ENCODE measurements at regions of chr3 and their contacts with region 1.

Region 1: GRCh38 chr3:2268779-2269178 is 170.1 kb downstream of the CNTN4 start:
- DNase-seq: no peak
- ATAC-seq: no peak
- H3K4me3 ChIP-seq: no peak overlapping the region
- H3K27ac ChIP-seq: no peak overlapping the region
- H3K4me1 ChIP-seq: no peaks in the 10 kb centered on the region
- H3K27me3 ChIP-seq: no peaks in the 10 kb centered on the region
- CTCF ChIP-seq: peak in 5 of 12 donors; percentile 13 to 19 (median 15)
- POLR2A ChIP-seq: no peak

Region 2: GRCh38 chr3:1576078-1576477 is 692.7 kb before region 1 on chr3:
- intact Hi-C with region 1: no loop called
- DNase-seq: no peak
- ATAC-seq: no peak
- H3K4me3 ChIP-seq: no peak overlapping the region
- H3K27ac ChIP-seq: no peak overlapping the region
- H3K4me1 ChIP-seq: no peaks in the 10 kb centered on the region
- H3K27me3 ChIP-seq: no peaks in the 10 kb centered on the region
- CTCF ChIP-seq: no peak
- POLR2A ChIP-seq: no peak

Region 3: DNA sequence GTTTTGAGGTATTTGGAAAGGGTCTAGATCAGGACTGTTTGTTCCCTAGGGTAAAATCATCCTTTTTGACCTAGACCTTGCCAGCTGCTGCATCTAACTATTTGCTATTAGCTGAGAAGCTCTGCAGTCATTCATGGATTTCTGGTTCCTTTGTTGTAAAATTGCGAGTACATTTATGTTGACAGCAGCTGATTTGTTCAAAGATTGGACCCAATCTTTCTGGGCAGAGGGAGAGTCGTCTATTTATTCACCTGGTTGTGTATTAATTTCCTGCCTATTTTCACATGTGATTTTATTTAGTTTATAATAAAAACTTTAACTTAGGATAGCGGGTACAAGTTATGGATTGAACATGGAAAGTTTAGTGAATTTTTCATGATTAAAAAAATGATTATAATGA is 66.1 kb after region 1 on chr3:
- intact Hi-C with region 1: no loop called
- DNase-seq: no peak
- ATAC-seq: no peak
- H3K4me3 ChIP-seq: no peak overlapping the region
- H3K27ac ChIP-seq: no peak overlapping the region
- H3K4me1 ChIP-seq: no peaks in the 10 kb centered on the region
- H3K27me3 ChIP-seq: no peaks in the 10 kb centered on the region
- CTCF ChIP-seq: no peak
- POLR2A ChIP-seq: no peak

Region 4: GRCh38 chr3:2921903-2922302 is 653.1 kb after region 1 on chr3:
- intact Hi-C with region 1: loop called in 1 of 10 experiments (anchors 5 kb)
- DNase-seq: peak in 1 of 5 donors; percentile 7
- ATAC-seq: peak in 1 of 4 donors; percentile 58
- H3K4me3 ChIP-seq: no peak overlapping the region
- H3K27ac ChIP-seq: no peak overlapping the region
- H3K4me1 ChIP-seq: no peaks in the 10 kb centered on the region
- H3K27me3 ChIP-seq: no peaks in the 10 kb centered on the region
- CTCF ChIP-seq: peak in 9 of 12 donors; percentile 20 to 56 (median 47)
- POLR2A ChIP-seq: no peak